Endothelial cell of umbilical vein (primary cell): ENCODE measurements at regions of chr7 and their contacts with region 1.

Region 1: DNA sequence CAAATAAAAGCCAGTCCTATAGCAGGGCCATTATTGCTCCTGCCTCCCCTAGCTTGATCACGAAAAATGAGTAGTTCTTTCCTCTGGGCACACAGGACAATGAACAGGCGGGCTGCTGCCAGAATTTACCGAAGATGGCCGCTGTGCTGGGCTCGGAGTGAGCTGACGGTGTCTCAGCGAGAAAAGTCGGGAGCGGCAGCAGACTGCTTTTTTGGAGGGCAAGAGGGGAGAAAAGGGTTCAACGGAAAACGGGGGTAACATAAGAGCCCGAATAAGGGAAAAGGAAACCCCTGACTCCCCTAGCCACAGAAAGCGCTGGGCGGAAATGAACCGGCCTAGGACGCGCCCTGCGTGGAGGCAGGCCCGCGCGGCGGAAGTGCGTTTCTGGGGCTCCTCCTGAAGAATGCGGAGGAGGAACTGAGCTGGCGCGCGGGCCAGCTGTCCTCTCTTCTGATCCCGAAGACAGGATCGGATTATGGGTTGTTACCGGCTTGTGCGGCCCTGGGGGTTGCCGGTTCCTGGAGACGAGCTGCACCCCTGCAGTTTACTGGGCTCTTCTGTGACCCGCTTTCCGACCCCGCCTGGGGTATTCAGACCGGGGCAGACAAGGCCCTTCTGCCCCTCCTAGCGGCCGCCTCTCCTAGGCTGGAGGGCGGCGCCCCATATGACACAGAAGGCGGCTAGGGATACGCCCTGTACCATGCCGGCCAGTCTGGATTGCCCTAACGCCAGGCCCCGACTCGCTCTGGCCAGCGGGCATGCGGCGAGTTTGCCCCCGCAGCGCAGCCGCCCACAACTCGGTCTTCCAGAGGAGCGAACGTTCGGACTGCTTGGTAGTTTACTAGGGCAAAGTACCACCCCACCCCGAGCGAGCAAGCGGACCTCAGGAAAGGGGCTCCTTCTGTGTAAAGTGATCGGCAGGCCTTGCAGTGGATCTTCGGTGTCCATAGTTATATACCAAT is 30.1 kb upstream of the KMT2E start:
- DNase-seq: peak; percentile 91
- H3K4me3 ChIP-seq: peak overlapping the region; percentile 34 to 71 (median 49)
- H3K27ac ChIP-seq: peak overlapping the region; percentile 98
- H3K4me1 ChIP-seq: peaks cover 56% of the 10 kb centered on the region
- H3K27me3 ChIP-seq: no peaks in the 10 kb centered on the region
- CTCF ChIP-seq: peak; percentile 26 to 64
- POLR2A ChIP-seq: peak; percentile 97

Region 2: DNA sequence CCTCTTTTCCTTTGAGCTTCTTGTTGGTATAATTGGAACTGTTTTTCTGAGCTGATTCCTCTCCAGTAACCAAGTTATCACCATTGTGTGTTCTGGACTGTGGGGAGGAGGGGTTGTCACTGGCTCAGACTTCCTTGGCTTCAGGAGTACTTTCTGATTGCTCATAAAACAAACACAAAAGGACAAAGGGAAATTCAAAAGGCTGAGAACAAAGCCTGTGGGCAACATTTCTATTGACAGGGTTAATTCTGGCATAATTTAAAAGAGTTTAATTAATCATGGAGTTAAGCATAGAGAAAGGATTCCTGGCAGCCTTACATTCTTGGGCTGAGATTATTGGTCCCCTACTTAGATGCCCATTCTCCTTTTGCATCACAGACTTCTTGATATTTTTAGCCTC is 192.8 kb before region 1 on chr7:
- CTCF ChIA-PET with region 1: no interaction called
- POLR2A ChIA-PET with region 1: no interaction called
- dilution Hi-C with region 1: no loop called
- intact Hi-C with region 1: no loop called
- DNase-seq: peak; percentile 91
- H3K4me3 ChIP-seq: no peak overlapping the region
- H3K27ac ChIP-seq: peak overlapping the region; percentile 61
- H3K4me1 ChIP-seq: peaks cover 28% of the 10 kb centered on the region
- H3K27me3 ChIP-seq: no peaks in the 10 kb centered on the region
- CTCF ChIP-seq: no peak
- POLR2A ChIP-seq: no peak

Region 3: DNA sequence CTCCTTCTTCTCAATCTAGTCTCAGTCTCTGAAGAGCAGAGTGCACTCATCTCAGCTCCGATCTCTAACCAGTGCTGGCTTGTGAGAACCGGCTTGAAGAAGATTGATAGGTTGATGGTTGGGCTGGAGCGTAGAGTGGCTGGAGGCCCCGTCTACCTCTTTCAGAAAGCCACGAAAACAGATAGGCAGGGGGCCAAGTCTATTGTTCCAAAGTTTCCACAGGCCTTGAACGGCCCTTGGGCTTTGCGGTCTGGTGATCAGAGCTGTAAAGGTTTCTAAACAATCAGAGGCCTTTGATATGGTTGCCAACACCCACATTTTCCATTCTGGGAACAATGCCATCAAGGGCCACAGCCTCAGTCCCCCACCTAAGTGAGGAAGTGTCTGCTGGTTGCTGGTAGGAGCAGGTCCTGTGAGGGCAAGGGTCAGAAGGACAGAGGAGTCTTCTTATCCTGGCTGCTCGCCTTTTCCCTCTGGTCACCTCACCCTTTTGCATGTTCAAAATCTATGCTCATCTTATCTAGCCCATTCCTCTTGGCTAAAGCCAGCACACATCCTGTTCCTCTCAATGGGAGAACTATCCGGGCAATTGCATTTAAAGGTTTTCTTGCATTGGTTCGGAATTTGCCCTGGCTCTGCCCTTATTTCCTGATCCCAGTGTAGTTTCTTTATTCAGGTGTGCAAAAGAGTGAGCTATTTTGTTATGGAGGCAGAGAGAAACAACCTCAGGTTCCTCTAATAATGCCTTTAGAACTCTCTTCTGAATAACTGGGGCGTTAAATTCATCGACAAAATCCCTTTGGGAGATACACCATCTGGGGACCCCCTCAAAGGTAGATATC is 40.1 kb before region 1 on chr7:
- CTCF ChIA-PET with region 1: interaction called, 45 read pairs
- POLR2A ChIA-PET with region 1: interaction called, 4 read pairs
- dilution Hi-C with region 1: no loop called
- intact Hi-C with region 1: loop called (anchors 1 kb)
- DNase-seq: peak; percentile 100
- H3K4me3 ChIP-seq: no peak overlapping the region
- H3K27ac ChIP-seq: peak overlapping the region; percentile 86
- H3K4me1 ChIP-seq: peaks cover 35% of the 10 kb centered on the region
- H3K27me3 ChIP-seq: no peaks in the 10 kb centered on the region
- CTCF ChIP-seq: no peak
- POLR2A ChIP-seq: no peak

Region 4: GRCh38 chr7:105036217-105037168 is 52.6 kb after region 1 on chr7:
- CTCF ChIA-PET with region 1: interaction called, 11 read pairs
- POLR2A ChIA-PET with region 1: no interaction called
- dilution Hi-C with region 1: no loop called
- intact Hi-C with region 1: loop called (anchors 2 kb)
- DNase-seq: no peak
- H3K4me3 ChIP-seq: no peak overlapping the region
- H3K27ac ChIP-seq: no peak overlapping the region
- H3K4me1 ChIP-seq: no peaks in the 10 kb centered on the region
- H3K27me3 ChIP-seq: no peaks in the 10 kb centered on the region
- CTCF ChIP-seq: no peak
- POLR2A ChIP-seq: no peak

Region 5: DNA sequence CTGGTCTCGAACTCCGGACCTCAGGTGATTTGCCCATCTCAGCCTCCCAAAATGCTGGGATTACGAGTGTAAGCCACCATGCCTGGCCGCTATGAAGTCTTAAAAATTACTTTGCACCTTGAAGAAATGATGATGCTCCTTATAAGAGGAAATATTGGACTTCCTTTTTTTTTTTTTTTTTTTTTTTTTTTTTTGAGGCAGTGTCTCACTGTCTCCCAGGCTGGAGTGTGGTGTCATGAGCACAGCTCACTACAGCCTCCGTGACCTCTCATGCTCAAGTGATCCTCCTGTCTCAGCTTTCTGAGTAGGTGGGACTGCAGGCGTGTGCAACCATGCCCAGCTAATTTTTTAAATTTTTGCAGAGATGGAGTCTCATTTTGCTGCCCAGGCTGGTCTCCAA is 95.5 kb after region 1 on chr7:
- CTCF ChIA-PET with region 1: interaction called, 10 read pairs
- POLR2A ChIA-PET with region 1: no interaction called
- dilution Hi-C with region 1: no loop called
- intact Hi-C with region 1: no loop called
- DNase-seq: no peak
- H3K4me3 ChIP-seq: no peak overlapping the region
- H3K27ac ChIP-seq: no peak overlapping the region
- H3K4me1 ChIP-seq: no peaks in the 10 kb centered on the region
- H3K27me3 ChIP-seq: no peaks in the 10 kb centered on the region
- CTCF ChIP-seq: no peak
- POLR2A ChIP-seq: no peak

Region 6: GRCh38 chr7:105198223-105198622 is 214.4 kb after region 1 on chr7:
- CTCF ChIA-PET with region 1: no interaction called
- POLR2A ChIA-PET with region 1: no interaction called
- dilution Hi-C with region 1: no loop called
- intact Hi-C with region 1: no loop called
- DNase-seq: peak; percentile 10
- H3K4me3 ChIP-seq: no peak overlapping the region
- H3K27ac ChIP-seq: no peak overlapping the region
- H3K4me1 ChIP-seq: no peaks in the 10 kb centered on the region
- H3K27me3 ChIP-seq: no peaks in the 10 kb centered on the region
- CTCF ChIP-seq: no peak
- POLR2A ChIP-seq: no peak

Region 7: GRCh38 chr7:105429746-105430612 is 446.1 kb after region 1 on chr7:
- CTCF ChIA-PET with region 1: interaction called, 11 read pairs
- POLR2A ChIA-PET with region 1: no interaction called
- dilution Hi-C with region 1: no loop called
- intact Hi-C with region 1: loop called (anchors 5 kb)
- DNase-seq: peak; percentile 83
- H3K4me3 ChIP-seq: no peak overlapping the region
- H3K27ac ChIP-seq: no peak overlapping the region
- H3K4me1 ChIP-seq: no peaks in the 10 kb centered on the region
- H3K27me3 ChIP-seq: no peaks in the 10 kb centered on the region
- CTCF ChIP-seq: peak; percentile 38 to 44
- POLR2A ChIP-seq: no peak